ENCODE measurements at regions of chr10 and their contacts with region 1.

Region 1: GRCh38 chr10:18659120-18659818 is at the start of gene ARL5B:
- DNase-seq: peak; percentile 91 to 99 (median 96)
- ATAC-seq: peak; percentile 93
- H3K4me3 ChIP-seq: peak within 1 kb of the TSS; percentile 79
- H3K4me3 Mint-ChIP-seq: peak within 1 kb of the TSS; percentile 100
- H3K27ac ChIP-seq: peak within 1 kb of the TSS; percentile 94 to 97
- H3K27ac Mint-ChIP-seq: peak within 1 kb of the TSS; percentile 100
- H3K4me1 ChIP-seq: peaks cover 19% of the 10 kb centered on the region
- H3K4me1 Mint-ChIP-seq: peaks cover 50% of the 10 kb centered on the region
- H3K27me3 ChIP-seq: no peaks in the 10 kb centered on the region
- H3K27me3 Mint-ChIP-seq: no peaks in the 10 kb centered on the region
- CTCF ChIP-seq: no peak
- total RNA-seq, gene ARL5B: 12.4 to 13.3 TPM

Region 2: GRCh38 chr10:18456984-18457383 is 202.3 kb before region 1 on chr10:
- CTCF ChIA-PET with region 1: no interaction called
- POLR2A ChIA-PET with region 1: no interaction called
- intact Hi-C with region 1: no loop called
- DNase-seq: no peak
- ATAC-seq: no peak
- H3K4me3 ChIP-seq: no peak overlapping the region
- H3K4me3 Mint-ChIP-seq: no peak overlapping the region
- H3K27ac ChIP-seq: no peak overlapping the region
- H3K27ac Mint-ChIP-seq: no peak overlapping the region
- H3K4me1 ChIP-seq: no peaks in the 10 kb centered on the region
- H3K4me1 Mint-ChIP-seq: no peaks in the 10 kb centered on the region
- H3K27me3 ChIP-seq: no peaks in the 10 kb centered on the region
- H3K27me3 Mint-ChIP-seq: no peaks in the 10 kb centered on the region
- CTCF ChIP-seq: no peak

Region 3: GRCh38 chr10:18583575-18584270 is 75.5 kb before region 1 on chr10:
- CTCF ChIA-PET with region 1: no interaction called
- POLR2A ChIA-PET with region 1: no interaction called
- intact Hi-C with region 1: loop called in 1 of 2 experiments (anchors 5 kb)
- DNase-seq: peak in 3 of 14 experiments; percentile 10 to 13 (median 13)
- ATAC-seq: no peak
- H3K4me3 ChIP-seq: no peak overlapping the region
- H3K4me3 Mint-ChIP-seq: no peak overlapping the region
- H3K27ac ChIP-seq: no peak overlapping the region
- H3K27ac Mint-ChIP-seq: no peak overlapping the region
- H3K4me1 ChIP-seq: peaks cover 4% of the 10 kb centered on the region
- H3K4me1 Mint-ChIP-seq: peaks cover 22% of the 10 kb centered on the region
- H3K27me3 ChIP-seq: no peaks in the 10 kb centered on the region
- H3K27me3 Mint-ChIP-seq: no peaks in the 10 kb centered on the region
- CTCF ChIP-seq: peak; percentile 29

Region 4: GRCh38 chr10:18620856-18621255 is 38.4 kb before region 1 on chr10:
- CTCF ChIA-PET with region 1: no interaction called
- POLR2A ChIA-PET with region 1: interaction called, 3 read pairs
- intact Hi-C with region 1: loop called in 1 of 2 experiments (anchors 5 kb)
- DNase-seq: no peak
- ATAC-seq: no peak
- H3K4me3 ChIP-seq: no peak overlapping the region
- H3K4me3 Mint-ChIP-seq: no peak overlapping the region
- H3K27ac ChIP-seq: no peak overlapping the region
- H3K27ac Mint-ChIP-seq: no peak overlapping the region
- H3K4me1 ChIP-seq: no peaks in the 10 kb centered on the region
- H3K4me1 Mint-ChIP-seq: no peaks in the 10 kb centered on the region
- H3K27me3 ChIP-seq: no peaks in the 10 kb centered on the region
- H3K27me3 Mint-ChIP-seq: no peaks in the 10 kb centered on the region
- CTCF ChIP-seq: no peak

Region 5: DNA sequence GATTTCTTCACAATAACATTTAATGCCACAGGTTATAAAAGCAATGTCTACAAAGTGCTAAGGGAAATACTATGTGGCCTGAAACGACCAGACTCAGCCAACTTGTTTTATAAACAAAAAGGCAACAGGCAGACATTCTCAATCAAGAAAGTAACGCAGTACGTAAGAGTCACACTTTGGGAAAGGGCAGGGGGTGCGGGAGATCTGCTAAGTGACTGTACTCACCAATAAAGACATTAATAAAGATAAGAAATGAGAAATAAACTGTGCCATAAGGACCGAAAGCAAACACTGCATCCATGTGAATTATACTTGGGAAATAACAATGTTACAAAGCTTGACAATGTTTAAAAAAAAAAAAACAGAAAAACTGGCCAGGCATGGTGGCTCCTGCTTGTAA is 33.4 kb before region 1 on chr10:
- CTCF ChIA-PET with region 1: no interaction called
- POLR2A ChIA-PET with region 1: interaction called, 13 read pairs
- intact Hi-C with region 1: loop called (anchors 1 to 5 kb)
- DNase-seq: no peak
- ATAC-seq: no peak
- H3K4me3 ChIP-seq: no peak overlapping the region
- H3K4me3 Mint-ChIP-seq: peak overlapping the region; percentile 53
- H3K27ac ChIP-seq: no peak overlapping the region
- H3K27ac Mint-ChIP-seq: peak overlapping the region; percentile 4
- H3K4me1 ChIP-seq: peaks cover 5% of the 10 kb centered on the region
- H3K4me1 Mint-ChIP-seq: peaks cover 21% of the 10 kb centered on the region
- H3K27me3 ChIP-seq: no peaks in the 10 kb centered on the region
- H3K27me3 Mint-ChIP-seq: no peaks in the 10 kb centered on the region
- CTCF ChIP-seq: no peak

Measured in CD4-positive, alpha-beta T cell (primary cell).